ENCODE measurements at regions of chr14 and their contacts with region 1.

Region 1: GRCh38 chr14:22570132-22570949 is 18.7 kb downstream of the DAD1 start:
- DNase-seq: peak; percentile 69 to 99 (median 85)
- ATAC-seq: peak; percentile 87
- H3K4me3 ChIP-seq: peak overlapping the region; percentile 34 to 38
- H3K4me3 Mint-ChIP-seq: peak overlapping the region; percentile 73
- H3K27ac ChIP-seq: peak overlapping the region; percentile 58 to 97
- H3K27ac Mint-ChIP-seq: peak overlapping the region; percentile 97
- H3K4me1 ChIP-seq: peaks cover 51% of the 10 kb centered on the region
- H3K4me1 Mint-ChIP-seq: peaks cover 54% of the 10 kb centered on the region
- H3K27me3 ChIP-seq: no peaks in the 10 kb centered on the region
- H3K27me3 Mint-ChIP-seq: no peaks in the 10 kb centered on the region
- CTCF ChIP-seq: peak; percentile 99

Region 2: DNA sequence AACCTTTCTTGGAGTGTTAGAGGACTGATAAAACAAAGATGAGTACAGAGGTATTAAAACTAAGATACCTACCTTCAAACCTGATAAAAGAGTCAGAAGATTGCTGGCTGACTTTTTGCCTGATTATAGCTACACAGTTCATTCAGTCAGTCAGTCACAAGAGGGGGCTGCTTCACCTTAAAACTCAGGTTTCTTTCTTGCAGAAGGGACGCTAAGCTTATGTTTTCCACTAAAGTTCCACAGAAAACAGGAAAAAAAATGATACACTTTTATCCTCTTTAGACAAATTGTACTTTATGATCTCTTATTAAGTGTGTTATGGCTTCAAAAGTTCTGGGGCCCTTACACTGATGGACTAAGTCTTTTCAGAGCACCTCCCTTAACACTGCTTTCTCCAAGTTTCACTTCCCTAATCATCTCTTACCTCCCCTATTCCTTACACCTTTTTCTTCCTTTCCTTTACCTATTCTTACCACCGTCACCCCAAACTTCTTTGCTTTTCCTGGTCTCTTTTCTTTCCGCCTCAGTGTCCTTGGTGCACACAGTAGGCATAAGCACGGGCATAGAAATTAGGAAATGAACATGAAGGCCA is 448.0 kb before region 1 on chr14:
- CTCF ChIA-PET with region 1: interaction called, 15 read pairs
- POLR2A ChIA-PET with region 1: no interaction called
- intact Hi-C with region 1: no loop called
- DNase-seq: peak in 3 of 9 experiments; percentile 24 to 62 (median 43)
- ATAC-seq: peak; percentile 43
- H3K4me3 ChIP-seq: no peak overlapping the region
- H3K4me3 Mint-ChIP-seq: peak overlapping the region; percentile 79
- H3K27ac ChIP-seq: peak overlapping the region in 1 of 2 experiments; percentile 54
- H3K27ac Mint-ChIP-seq: peak overlapping the region; percentile 93
- H3K4me1 ChIP-seq: no peaks in the 10 kb centered on the region
- H3K4me1 Mint-ChIP-seq: peaks cover 19% of the 10 kb centered on the region
- H3K27me3 ChIP-seq: no peaks in the 10 kb centered on the region
- H3K27me3 Mint-ChIP-seq: no peaks in the 10 kb centered on the region
- CTCF ChIP-seq: peak; percentile 14

Region 3: DNA sequence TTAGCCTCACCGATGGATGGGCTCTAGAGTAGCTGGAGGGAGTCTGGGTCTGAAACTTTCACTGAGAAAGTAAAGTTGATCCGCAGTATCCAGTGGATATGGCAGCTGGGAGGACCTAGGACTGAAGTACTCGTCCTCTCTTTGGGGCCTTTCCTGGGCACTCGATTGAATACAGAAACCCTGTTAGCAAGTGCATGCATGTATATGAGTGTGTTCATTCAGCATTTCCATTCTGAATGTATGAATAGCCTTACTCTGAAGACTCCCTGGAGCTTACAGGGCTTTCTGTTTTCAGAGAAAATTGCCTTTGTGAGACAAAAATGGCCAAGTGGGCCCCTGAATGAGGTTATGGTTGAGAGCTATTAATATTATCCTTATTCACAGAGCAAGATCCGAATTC is 44.1 kb before region 1 on chr14:
- CTCF ChIA-PET with region 1: interaction called, 25 read pairs
- POLR2A ChIA-PET with region 1: interaction called, 10 read pairs
- intact Hi-C with region 1: no loop called
- DNase-seq: no peak
- ATAC-seq: no peak
- H3K4me3 ChIP-seq: peak overlapping the region; percentile 47 to 61
- H3K4me3 Mint-ChIP-seq: peak overlapping the region; percentile 86
- H3K27ac ChIP-seq: peak overlapping the region; percentile 27 to 86
- H3K27ac Mint-ChIP-seq: peak overlapping the region; percentile 99
- H3K4me1 ChIP-seq: peaks cover 90% of the 10 kb centered on the region
- H3K4me1 Mint-ChIP-seq: peaks cover 89% of the 10 kb centered on the region
- H3K27me3 ChIP-seq: no peaks in the 10 kb centered on the region
- H3K27me3 Mint-ChIP-seq: no peaks in the 10 kb centered on the region
- CTCF ChIP-seq: no peak

Region 4: GRCh38 chr14:22598099-22598899 is 28.0 kb after region 1 on chr14 and contains the start of gene ABHD4:
- CTCF ChIA-PET with region 1: interaction called, 40 read pairs
- POLR2A ChIA-PET with region 1: interaction called, 9 read pairs
- intact Hi-C with region 1: no loop called
- DNase-seq: peak; percentile 16 to 79 (median 61)
- ATAC-seq: peak; percentile 77
- H3K4me3 ChIP-seq: peak within 1 kb of the TSS; percentile 70 to 86
- H3K4me3 Mint-ChIP-seq: peak within 1 kb of the TSS; percentile 90
- H3K27ac ChIP-seq: peak within 1 kb of the TSS; percentile 55 to 67
- H3K27ac Mint-ChIP-seq: peak within 1 kb of the TSS; percentile 88
- H3K4me1 ChIP-seq: peaks cover 22% of the 10 kb centered on the region
- H3K4me1 Mint-ChIP-seq: peaks cover 41% of the 10 kb centered on the region
- H3K27me3 ChIP-seq: no peaks in the 10 kb centered on the region
- H3K27me3 Mint-ChIP-seq: no peaks in the 10 kb centered on the region
- CTCF ChIP-seq: no peak
- total RNA-seq, gene ABHD4: 7.9 to 8.3 TPM

Region 5: DNA sequence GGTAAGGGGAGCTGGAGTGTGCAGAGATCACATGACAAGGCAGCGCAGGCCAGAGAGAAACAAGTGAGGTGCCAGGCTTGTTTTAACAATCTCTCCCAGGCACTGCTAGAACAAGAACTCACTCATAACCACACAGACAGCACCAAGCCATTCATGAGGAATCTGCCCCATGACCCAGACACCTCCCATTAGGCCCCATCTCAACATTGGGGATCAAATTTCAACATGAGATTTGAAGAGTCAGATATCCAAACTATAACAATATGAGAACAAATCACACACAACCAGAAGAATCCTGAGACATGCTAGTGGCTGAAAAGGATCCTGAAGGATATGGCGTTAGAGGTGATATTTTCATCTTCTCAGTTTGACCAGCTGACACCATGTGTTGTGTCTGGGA is 51.9 kb after region 1 on chr14:
- CTCF ChIA-PET with region 1: no interaction called
- POLR2A ChIA-PET with region 1: no interaction called
- intact Hi-C with region 1: no loop called
- DNase-seq: no peak
- ATAC-seq: no peak
- H3K4me3 ChIP-seq: no peak overlapping the region
- H3K4me3 Mint-ChIP-seq: no peak overlapping the region
- H3K27ac ChIP-seq: no peak overlapping the region
- H3K27ac Mint-ChIP-seq: no peak overlapping the region
- H3K4me1 ChIP-seq: no peaks in the 10 kb centered on the region
- H3K4me1 Mint-ChIP-seq: no peaks in the 10 kb centered on the region
- H3K27me3 ChIP-seq: no peaks in the 10 kb centered on the region
- H3K27me3 Mint-ChIP-seq: no peaks in the 10 kb centered on the region
- CTCF ChIP-seq: no peak

Region 6: DNA sequence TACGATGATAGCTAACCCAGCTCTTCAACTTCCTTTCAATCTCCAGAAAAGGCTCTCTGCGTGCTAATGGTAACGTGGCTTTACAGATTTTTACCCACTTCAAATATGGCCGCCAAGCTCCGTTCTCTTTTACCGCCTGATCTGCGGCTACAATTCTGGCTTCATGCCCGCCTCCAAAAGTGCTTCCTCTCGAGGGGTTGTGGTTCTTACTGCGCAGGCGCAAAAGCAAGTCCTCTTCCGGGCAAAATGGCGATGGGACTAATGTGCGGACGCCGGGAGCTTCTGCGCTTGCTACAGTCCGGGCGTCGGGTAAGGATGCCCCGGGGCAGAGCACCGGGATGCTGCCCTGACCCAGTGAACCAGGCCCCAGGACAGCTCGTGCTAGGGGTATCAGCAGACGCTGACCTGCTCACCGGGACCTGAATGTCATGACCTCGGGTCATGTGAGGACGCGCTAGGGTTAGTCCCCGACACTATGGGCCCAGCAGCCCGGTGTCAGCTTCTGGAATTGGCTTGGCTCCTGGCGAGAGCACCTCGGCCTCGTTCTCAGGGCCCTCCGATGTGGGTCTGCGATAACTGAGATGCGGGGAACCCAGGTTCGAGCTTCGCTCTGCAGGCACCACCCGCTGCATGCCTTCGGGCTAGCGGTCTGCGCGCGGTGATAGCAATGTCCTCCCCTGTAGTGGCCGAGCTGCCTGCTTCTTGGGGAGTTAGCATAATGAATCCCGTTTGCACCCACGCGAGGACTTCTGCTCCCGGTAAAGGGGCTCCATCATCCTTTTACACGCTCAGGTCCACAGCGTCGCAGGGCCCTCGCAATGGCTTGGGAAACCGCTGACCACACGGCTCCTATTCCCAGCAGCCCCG is 196.3 kb after region 1 on chr14 and contains the start of gene OXA1L:
- CTCF ChIA-PET with region 1: interaction called, 8 read pairs
- POLR2A ChIA-PET with region 1: interaction called, 7 read pairs
- intact Hi-C with region 1: loop called in 1 of 2 experiments (anchors 5 kb)
- DNase-seq: peak; percentile 88 to 99 (median 97)
- ATAC-seq: peak; percentile 92
- H3K4me3 ChIP-seq: peak within 1 kb of the TSS; percentile 93 to 99
- H3K4me3 Mint-ChIP-seq: peak within 1 kb of the TSS; percentile 94
- H3K27ac ChIP-seq: peak within 1 kb of the TSS; percentile 84 to 93
- H3K27ac Mint-ChIP-seq: peak within 1 kb of the TSS; percentile 96
- H3K4me1 ChIP-seq: peaks cover 22% of the 10 kb centered on the region
- H3K4me1 Mint-ChIP-seq: peaks cover 34% of the 10 kb centered on the region
- H3K27me3 ChIP-seq: no peaks in the 10 kb centered on the region
- H3K27me3 Mint-ChIP-seq: no peaks in the 10 kb centered on the region
- CTCF ChIP-seq: no peak
- total RNA-seq, gene OXA1L: 186 to 192 TPM

Region 7: DNA sequence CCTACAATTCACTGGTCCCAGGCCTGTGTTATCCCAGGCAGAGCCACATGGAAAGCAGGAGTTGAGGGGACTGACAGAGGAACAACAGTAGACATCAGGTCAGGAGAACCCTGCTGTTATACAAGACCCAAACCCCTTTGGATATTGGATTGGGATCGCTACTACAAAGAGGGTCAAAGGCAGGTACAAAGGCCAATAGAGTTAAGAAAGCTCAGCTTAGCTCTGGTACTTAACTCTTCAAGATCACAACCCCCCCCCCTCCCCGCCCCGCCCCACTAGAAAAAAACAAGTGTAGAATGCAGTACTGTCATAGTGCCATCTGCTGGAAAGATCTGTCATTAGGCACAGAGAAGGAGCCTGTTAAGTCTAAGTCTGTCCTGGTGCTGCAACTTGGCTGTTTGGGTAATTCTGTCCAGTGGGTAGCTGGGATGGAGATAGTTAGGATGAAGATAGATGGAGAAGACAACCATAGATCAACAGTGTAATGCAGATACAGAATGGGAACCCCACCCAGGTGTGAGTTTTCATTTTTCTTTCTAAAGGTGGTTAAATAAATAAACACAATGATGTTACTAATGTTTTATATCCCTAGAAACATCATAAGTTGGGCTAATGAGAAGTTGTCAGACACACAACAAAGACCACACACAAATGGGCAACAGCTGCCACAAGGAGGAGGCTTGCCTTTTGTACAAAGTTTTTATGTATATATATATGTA is 329.9 kb after region 1 on chr14:
- CTCF ChIA-PET with region 1: interaction called, 32 read pairs
- POLR2A ChIA-PET with region 1: no interaction called
- intact Hi-C with region 1: loop called (anchors 1 kb)
- DNase-seq: peak in 5 of 9 experiments; percentile 33 to 82 (median 48)
- ATAC-seq: peak; percentile 86
- H3K4me3 ChIP-seq: no peak overlapping the region
- H3K4me3 Mint-ChIP-seq: no peak overlapping the region
- H3K27ac ChIP-seq: no peak overlapping the region
- H3K27ac Mint-ChIP-seq: no peak overlapping the region
- H3K4me1 ChIP-seq: peaks cover 3% of the 10 kb centered on the region
- H3K4me1 Mint-ChIP-seq: peaks cover 6% of the 10 kb centered on the region
- H3K27me3 ChIP-seq: no peaks in the 10 kb centered on the region
- H3K27me3 Mint-ChIP-seq: no peaks in the 10 kb centered on the region
- CTCF ChIP-seq: peak; percentile 60

Measured in CD8-positive, alpha-beta T cell (primary cell).